Ovary (tissue), 10 donors: ENCODE measurements at regions of chr18 and their contacts with region 1.

Region 1: DNA sequence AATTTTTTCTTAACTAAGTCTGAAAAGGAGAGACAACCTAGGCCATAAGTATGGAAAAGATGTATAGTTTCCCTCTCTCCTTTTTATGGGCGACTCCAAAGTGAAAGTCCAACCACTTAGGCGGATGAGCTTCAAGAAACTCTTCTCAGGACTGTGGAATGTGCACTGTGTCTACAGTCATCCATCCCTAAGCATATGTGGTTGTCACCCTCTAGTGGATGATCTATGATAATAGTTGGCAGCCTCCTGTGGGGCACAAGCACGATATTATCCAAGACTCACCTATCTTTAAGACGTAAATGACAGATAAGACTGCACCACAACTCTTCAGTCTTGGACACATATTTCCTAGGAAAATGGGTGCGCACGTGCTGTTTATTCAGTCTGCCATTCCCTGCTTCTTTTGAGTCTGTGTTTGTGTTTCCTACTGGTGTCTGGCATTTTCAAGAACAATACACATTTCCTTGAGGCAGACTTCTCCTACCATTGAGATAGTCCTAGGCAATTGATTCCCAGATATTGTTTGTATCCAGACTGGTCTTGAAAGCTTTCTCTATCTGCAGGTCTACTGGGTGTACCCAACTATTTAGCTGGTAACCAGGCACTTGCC is 145.5 kb upstream of the CTAGE1 start:
- DNase-seq: peak in 2 of 5 donors; percentile 35 to 59
- H3K4me3 ChIP-seq: no peak overlapping the region
- H3K27ac ChIP-seq: no peak overlapping the region
- H3K4me1 ChIP-seq: no peaks in the 10 kb centered on the region
- H3K27me3 ChIP-seq: no peaks in the 10 kb centered on the region
- CTCF ChIP-seq: peak; percentile 80 to 90 (median 88)
- EP300 ChIP-seq: peak; percentile 11
- POLR2A ChIP-seq: no peak

Region 2: GRCh38 chr18:21904856-21905255 is 658.3 kb before region 1 on chr18:
- intact Hi-C with region 1: loop called in 3 of 4 experiments (anchors 10 kb)
- DNase-seq: peak; percentile 42 to 70 (median 51)
- H3K4me3 ChIP-seq: no peak overlapping the region
- H3K27ac ChIP-seq: no peak overlapping the region
- H3K4me1 ChIP-seq: peaks cover 3% of the 10 kb centered on the region
- H3K27me3 ChIP-seq: no peaks in the 10 kb centered on the region
- CTCF ChIP-seq: no peak
- EP300 ChIP-seq: no peak
- POLR2A ChIP-seq: no peak

Region 3: GRCh38 chr18:21914739-21915319 is 648.4 kb before region 1 on chr18:
- intact Hi-C with region 1: loop called in 2 of 4 experiments (anchors 10 kb)
- DNase-seq: no peak
- H3K4me3 ChIP-seq: no peak overlapping the region
- H3K27ac ChIP-seq: no peak overlapping the region
- H3K4me1 ChIP-seq: no peaks in the 10 kb centered on the region
- H3K27me3 ChIP-seq: no peaks in the 10 kb centered on the region
- CTCF ChIP-seq: peak in 1 of 3 donors; percentile 37
- EP300 ChIP-seq: no peak
- POLR2A ChIP-seq: no peak

Region 4: GRCh38 chr18:21997207-21998143 is 565.7 kb before region 1 on chr18:
- intact Hi-C with region 1: loop called in 2 of 4 experiments (anchors 10 kb)
- DNase-seq: peak in 2 of 5 donors; percentile 19 to 38
- H3K4me3 ChIP-seq: no peak overlapping the region
- H3K27ac ChIP-seq: no peak overlapping the region
- H3K4me1 ChIP-seq: no peaks in the 10 kb centered on the region
- H3K27me3 ChIP-seq: no peaks in the 10 kb centered on the region
- CTCF ChIP-seq: peak; percentile 38 to 64 (median 52)
- EP300 ChIP-seq: no peak
- POLR2A ChIP-seq: no peak

Region 5: DNA sequence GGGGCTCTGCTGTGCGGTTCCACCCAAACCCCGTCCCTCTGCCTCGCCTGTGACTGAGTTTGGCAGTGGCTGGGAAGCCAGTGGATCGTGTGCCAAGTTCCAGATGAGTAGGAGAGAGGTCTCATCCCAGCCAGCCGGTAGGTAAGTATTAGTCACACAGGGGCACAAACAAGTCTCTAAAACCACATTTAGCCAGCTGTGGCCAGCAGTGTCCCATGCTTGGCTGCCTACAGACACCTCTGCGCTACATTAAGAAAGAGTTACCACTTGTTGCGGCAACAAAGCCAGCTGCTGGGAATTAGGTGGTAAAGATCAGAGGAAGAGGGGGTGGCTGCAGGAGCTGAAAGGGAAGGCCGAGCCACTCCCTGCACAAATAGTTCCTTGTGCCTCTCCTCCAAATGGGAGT is 312.6 kb before region 1 on chr18:
- intact Hi-C with region 1: no loop called
- DNase-seq: no peak
- H3K4me3 ChIP-seq: no peak overlapping the region
- H3K27ac ChIP-seq: no peak overlapping the region
- H3K4me1 ChIP-seq: no peaks in the 10 kb centered on the region
- H3K27me3 ChIP-seq: no peaks in the 10 kb centered on the region
- CTCF ChIP-seq: no peak
- EP300 ChIP-seq: no peak
- POLR2A ChIP-seq: no peak

Region 6: DNA sequence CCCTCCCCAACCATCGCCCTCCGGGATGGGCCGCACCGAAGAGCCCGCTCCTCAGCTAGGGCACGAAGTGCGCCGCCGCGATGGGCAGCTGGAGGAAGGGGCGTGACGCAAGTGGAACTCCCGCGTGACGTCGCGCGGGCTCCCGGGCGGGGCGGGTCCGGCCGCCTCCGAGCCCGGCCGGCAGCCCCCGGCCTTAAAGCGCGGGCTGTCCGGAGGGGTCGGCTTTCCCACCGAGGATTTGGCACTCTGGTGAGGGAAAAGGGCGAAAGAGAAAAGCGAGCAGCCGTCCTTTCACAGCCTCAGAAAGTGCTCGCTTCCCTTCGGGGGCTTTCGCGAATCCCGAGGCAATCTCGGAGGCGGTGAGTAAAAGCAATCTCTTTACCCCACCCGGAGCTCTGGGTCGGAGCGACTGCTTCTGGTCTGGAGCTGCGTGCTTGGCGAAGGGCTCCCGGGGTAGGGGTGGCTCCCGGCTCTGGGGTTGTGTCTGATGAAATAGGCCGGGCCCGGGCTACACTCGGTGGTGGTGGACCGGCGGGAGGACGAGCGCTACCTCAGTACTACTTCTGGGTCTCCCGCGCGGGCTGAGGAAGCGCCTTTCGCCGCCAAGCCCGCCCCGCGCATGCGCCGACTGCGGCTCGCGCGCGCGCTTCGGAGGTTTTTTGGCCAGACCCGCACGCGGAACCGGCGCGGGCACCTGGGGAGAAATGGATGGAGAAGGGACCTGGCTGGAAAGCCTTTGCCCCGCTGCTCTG is 370.2 kb after region 1 on chr18 and contains the start of gene RBBP8:
- intact Hi-C with region 1: loop called in 1 of 4 experiments (anchors 5 kb)
- DNase-seq: peak; percentile 83 to 89 (median 87)
- H3K4me3 ChIP-seq: peak within 1 kb of the TSS; percentile 95
- H3K27ac ChIP-seq: peak within 1 kb of the TSS; percentile 97
- H3K4me1 ChIP-seq: no peaks in the 10 kb centered on the region
- H3K27me3 ChIP-seq: no peaks in the 10 kb centered on the region
- CTCF ChIP-seq: no peak
- EP300 ChIP-seq: no peak
- POLR2A ChIP-seq: peak; percentile 70
- total RNA-seq, gene RBBP8: 10.4 to 59.4 (median 14.8) TPM